ENCODE measurements at regions of chr16 and their contacts with region 1.

Region 1: GRCh38 chr16:31868691-31869167 is 4.9 kb upstream of the ZNF267 start:
- DNase-seq: peak; percentile 75
- ATAC-seq: peak; percentile 80
- H3K4me3 ChIP-seq: no peak overlapping the region
- H3K27ac ChIP-seq: no peak overlapping the region
- H3K4me1 ChIP-seq: peaks cover 9% of the 10 kb centered on the region; the same call in 1 of the 2 replicates
- H3K27me3 ChIP-seq: no peaks in the 10 kb centered on the region
- CTCF ChIP-seq: peak; percentile 70

Region 2: DNA sequence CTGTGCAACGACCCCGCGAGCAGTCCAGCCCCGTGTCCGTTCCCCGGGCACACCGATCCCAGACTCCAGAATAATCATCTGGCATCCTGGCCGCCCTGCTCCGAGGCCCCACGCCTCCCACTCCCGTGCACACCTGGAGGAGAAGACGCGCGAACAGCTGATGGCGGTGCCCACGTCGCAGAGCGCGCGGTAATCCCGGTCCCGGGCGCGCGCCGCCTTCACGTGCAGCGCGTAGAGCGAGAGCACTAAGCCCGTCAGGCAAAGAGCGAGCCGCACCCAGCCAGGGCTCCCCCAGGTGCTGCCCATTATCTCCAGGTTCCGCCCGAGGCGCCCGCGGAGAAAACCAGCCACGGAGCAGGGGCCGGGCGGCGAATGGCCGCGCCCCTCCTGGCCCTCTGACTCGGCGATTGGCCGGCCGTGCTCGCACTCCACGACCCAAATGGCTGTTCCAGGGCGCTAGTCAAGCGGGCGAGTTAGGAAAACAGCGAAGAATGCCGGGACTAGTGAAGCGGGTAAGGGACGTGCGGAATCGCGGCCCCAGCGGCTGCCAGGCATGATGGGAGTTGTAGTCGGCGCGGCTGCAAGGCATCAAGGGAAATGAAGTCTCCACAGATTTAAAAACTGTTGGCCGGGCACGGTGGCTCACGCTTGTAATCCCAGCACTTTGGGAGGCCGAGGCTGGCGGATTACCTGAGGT is 774.2 kb before region 1 on chr16 and contains the start of gene VKORC1:
- CTCF ChIA-PET with region 1: no interaction called
- POLR2A ChIA-PET with region 1: no interaction called
- intact Hi-C with region 1: loop called (anchors 5 kb)
- DNase-seq: peak; percentile 96
- ATAC-seq: peak; percentile 94
- H3K4me3 ChIP-seq: peak within 1 kb of the TSS; percentile 98
- H3K27ac ChIP-seq: peak within 1 kb of the TSS; percentile 68
- H3K4me1 ChIP-seq: peaks cover 7% of the 10 kb centered on the region; the same call in 1 of the 2 replicates
- H3K27me3 ChIP-seq: no peaks in the 10 kb centered on the region
- CTCF ChIP-seq: no peak
- total RNA-seq, gene VKORC1: 105 and 127 TPM in 2 replicates

Region 3: GRCh38 chr16:31451681-31452351 is 416.9 kb before region 1 on chr16:
- CTCF ChIA-PET with region 1: interaction called, 4 read pairs
- POLR2A ChIA-PET with region 1: no interaction called
- intact Hi-C with region 1: loop called (anchors 5 kb)
- DNase-seq: peak; percentile 60
- ATAC-seq: peak; percentile 87
- H3K4me3 ChIP-seq: no peak overlapping the region
- H3K27ac ChIP-seq: no peak overlapping the region
- H3K4me1 ChIP-seq: peaks cover 18% of the 10 kb centered on the region
- H3K27me3 ChIP-seq: no peaks in the 10 kb centered on the region
- CTCF ChIP-seq: peak; percentile 55; the same call in 1 of the 2 replicates

Region 4: GRCh38 chr16:31713071-31713944 is 155.4 kb before region 1 on chr16:
- CTCF ChIA-PET with region 1: no interaction called
- POLR2A ChIA-PET with region 1: no interaction called
- intact Hi-C with region 1: loop called (anchors 10 kb)
- DNase-seq: peak; percentile 90
- ATAC-seq: peak; percentile 90
- H3K4me3 ChIP-seq: peak overlapping the region; percentile 93
- H3K27ac ChIP-seq: peak overlapping the region; percentile 23; the same call in 1 of the 2 replicates
- H3K4me1 ChIP-seq: peaks cover 10% of the 10 kb centered on the region; the same call in 1 of the 2 replicates
- H3K27me3 ChIP-seq: no peaks in the 10 kb centered on the region
- CTCF ChIP-seq: no peak

Region 5: DNA sequence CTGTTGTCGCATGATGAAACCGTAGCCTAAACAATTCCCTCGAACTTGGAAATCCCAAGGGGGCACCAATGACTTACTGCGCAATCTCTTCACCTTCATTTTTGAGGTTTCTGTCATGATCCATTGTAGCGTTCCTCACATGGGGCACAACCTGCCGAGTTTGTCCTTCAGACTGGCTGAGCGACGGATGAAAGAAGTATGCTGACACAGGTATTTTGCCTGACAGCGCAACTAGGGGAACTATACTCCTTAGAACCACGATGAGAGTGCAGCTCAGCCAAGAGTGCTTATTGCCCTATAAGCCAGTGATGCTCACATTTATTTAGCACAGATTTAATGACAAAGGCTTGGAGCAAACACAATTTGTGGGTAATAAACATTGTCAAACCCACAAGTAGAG is 101.5 kb before region 1 on chr16:
- CTCF ChIA-PET with region 1: no interaction called
- POLR2A ChIA-PET with region 1: no interaction called
- intact Hi-C with region 1: no loop called
- DNase-seq: no peak
- ATAC-seq: no peak
- H3K4me3 ChIP-seq: no peak overlapping the region
- H3K27ac ChIP-seq: no peak overlapping the region
- H3K4me1 ChIP-seq: no peaks in the 10 kb centered on the region
- H3K27me3 ChIP-seq: no peaks in the 10 kb centered on the region
- CTCF ChIP-seq: no peak

Region 6: DNA sequence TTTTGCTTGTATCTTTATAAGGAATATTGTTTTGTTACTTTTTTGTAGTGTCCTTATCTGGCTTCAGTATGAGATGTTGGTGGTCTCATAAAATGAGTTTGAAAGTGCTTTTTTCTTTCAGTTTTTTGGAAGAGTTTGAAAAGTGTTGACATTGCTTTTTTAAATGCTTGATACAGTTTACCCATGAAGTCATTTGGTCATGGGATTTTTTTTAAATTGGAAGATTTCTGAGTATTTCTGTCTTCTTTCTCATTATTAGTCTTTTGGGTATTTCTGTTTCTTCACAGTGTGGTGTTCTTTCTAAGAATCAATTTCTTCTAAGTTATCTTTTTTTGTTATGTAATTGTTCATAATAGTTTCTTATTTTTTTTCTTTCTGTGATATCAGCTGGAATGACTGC is 20.0 kb after region 1 on chr16:
- CTCF ChIA-PET with region 1: no interaction called
- POLR2A ChIA-PET with region 1: no interaction called
- intact Hi-C with region 1: no loop called
- DNase-seq: no peak
- ATAC-seq: no peak
- H3K4me3 ChIP-seq: no peak overlapping the region
- H3K27ac ChIP-seq: no peak overlapping the region
- H3K4me1 ChIP-seq: no peaks in the 10 kb centered on the region
- H3K27me3 ChIP-seq: no peaks in the 10 kb centered on the region
- CTCF ChIP-seq: no peak

Region 7: GRCh38 chr16:31916056-31916488 is 47.3 kb after region 1 on chr16:
- CTCF ChIA-PET with region 1: no interaction called
- POLR2A ChIA-PET with region 1: no interaction called
- intact Hi-C with region 1: no loop called
- DNase-seq: no peak
- ATAC-seq: no peak
- H3K4me3 ChIP-seq: peak overlapping the region; percentile 9; the same call in 1 of the 2 replicates
- H3K27ac ChIP-seq: no peak overlapping the region
- H3K4me1 ChIP-seq: no peaks in the 10 kb centered on the region
- H3K27me3 ChIP-seq: no peaks in the 10 kb centered on the region
- CTCF ChIP-seq: no peak